ENCODE measurements at regions of chr10 and their contacts with region 1.

Region 1: GRCh38 chr10:132540456-132540855 is 2.9 kb downstream of the INPP5A start:
- DNase-seq: peak; percentile 62
- H3K4me3 ChIP-seq: peak overlapping the region; percentile 81
- H3K27ac ChIP-seq: peak overlapping the region; percentile 60
- H3K4me1 ChIP-seq: peaks cover 35% of the 10 kb centered on the region
- H3K27me3 ChIP-seq: no peaks in the 10 kb centered on the region

Region 2: DNA sequence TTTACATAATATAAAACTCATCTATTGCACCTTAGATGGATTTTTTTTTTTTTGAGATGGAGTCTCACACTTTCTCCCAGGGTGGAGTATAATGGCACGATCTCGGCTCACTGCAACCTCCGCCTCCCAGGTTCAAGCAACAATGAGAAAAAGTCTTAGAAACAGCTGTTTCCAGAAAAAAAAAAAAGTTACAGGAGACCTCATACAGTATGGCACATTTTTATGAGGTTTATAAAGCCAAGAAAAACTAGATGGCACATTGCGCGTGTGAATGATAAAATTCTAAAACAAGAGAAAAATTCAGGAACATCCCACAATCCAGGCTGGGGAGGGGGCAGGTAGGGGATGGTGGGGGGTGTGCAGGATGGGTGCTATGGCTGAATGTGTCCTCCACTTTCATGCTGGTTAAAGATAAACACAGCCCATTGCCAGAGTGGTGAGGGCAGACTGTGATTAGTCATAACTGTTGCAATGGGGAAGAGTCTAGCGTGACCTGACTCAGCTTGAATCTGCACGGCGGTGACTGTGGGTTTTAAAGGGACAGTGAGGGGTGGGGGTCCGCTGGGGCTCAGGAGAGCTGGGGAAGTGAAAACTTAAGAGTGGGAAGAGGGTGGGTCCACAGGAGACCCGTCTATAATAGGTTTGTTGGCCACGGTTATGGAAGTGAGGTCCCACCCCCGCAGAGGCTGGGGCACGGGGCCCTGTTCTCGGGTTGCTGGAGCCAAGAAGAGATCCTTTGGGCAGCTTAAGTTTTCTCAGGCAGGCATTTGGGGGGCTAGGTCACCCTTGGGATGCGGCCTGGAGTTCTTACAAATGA is 220.4 kb before region 1 on chr10:
- in situ Hi-C with region 1: no loop called
- DNase-seq: peak; percentile 94
- H3K4me3 ChIP-seq: peak overlapping the region; percentile 52
- H3K27ac ChIP-seq: peak overlapping the region; percentile 75
- H3K4me1 ChIP-seq: peaks cover 30% of the 10 kb centered on the region
- H3K27me3 ChIP-seq: no peaks in the 10 kb centered on the region

Region 3: GRCh38 chr10:132421392-132421877 is 119.0 kb before region 1 on chr10:
- in situ Hi-C with region 1: no loop called
- DNase-seq: peak; percentile 82
- H3K4me3 ChIP-seq: 0 out of 2 replicates have a peak overlapping the region, but pooled peaks have one; percentile 8
- H3K27ac ChIP-seq: peak overlapping the region; percentile 36; the same call in 1 of the 2 replicates
- H3K4me1 ChIP-seq: peaks cover 8% of the 10 kb centered on the region
- H3K27me3 ChIP-seq: no peaks in the 10 kb centered on the region

Region 4: DNA sequence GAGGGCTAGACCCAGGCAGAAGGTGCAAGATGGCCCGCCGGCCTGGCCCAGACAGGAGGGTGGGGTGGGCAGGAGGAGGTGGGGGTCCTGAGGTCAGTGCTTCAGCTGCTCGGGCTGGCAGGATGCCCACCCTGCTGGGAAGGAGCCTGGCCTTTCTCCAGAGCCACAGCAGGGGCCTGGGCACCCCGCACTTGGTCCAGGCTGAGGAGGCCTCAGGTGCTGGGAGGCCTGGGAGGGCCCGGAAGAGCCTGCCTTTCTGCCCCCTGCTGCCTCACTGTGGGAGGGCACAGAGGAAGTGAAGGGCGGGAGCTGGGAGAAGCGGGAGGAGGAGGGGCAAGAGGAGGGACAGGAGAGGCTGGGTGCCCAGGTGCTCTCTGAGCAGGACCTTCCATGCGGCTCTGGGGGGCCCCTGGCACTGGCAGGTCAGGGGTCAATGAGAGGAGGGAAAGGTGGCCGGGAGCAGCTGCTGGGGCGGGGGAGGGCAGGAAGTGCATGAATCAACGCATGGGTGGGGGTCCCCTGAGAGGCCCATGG is 93.7 kb before region 1 on chr10:
- in situ Hi-C with region 1: no loop called
- DNase-seq: peak; percentile 57
- H3K4me3 ChIP-seq: no peak overlapping the region
- H3K27ac ChIP-seq: no peak overlapping the region
- H3K4me1 ChIP-seq: no peaks in the 10 kb centered on the region
- H3K27me3 ChIP-seq: no peaks in the 10 kb centered on the region

Region 5: GRCh38 chr10:132470410-132471124 is 69.9 kb before region 1 on chr10:
- in situ Hi-C with region 1: loop called (anchors 5 kb)
- DNase-seq: no peak
- H3K4me3 ChIP-seq: no peak overlapping the region
- H3K27ac ChIP-seq: no peak overlapping the region
- H3K4me1 ChIP-seq: no peaks in the 10 kb centered on the region
- H3K27me3 ChIP-seq: 0 out of 2 replicates have a peak, but pooled peaks cover 12% of the 10 kb centered on the region